Sigmoid colon (tissue), 7 donors: ENCODE measurements at regions of chr2 and their contacts with region 1.

Region 1: GRCh38 chr2:174682578-174683391 is 81.5 kb downstream of the CHRNA1 start:
- DNase-seq: peak; percentile 88
- H3K4me3 ChIP-seq: peak overlapping the region; percentile 84 to 96 (median 92)
- H3K27ac ChIP-seq: peak overlapping the region; percentile 88 to 95 (median 90)
- H3K4me1 ChIP-seq: peaks cover 0 to 46% (median 27%) of the 10 kb centered on the region in 4 donors
- H3K27me3 ChIP-seq: no peaks in the 10 kb centered on the region
- CTCF ChIP-seq: no peak
- EP300 ChIP-seq: no peak
- POLR2A ChIP-seq: no peak

Region 2: GRCh38 chr2:174561283-174561971 is 121.4 kb before region 1 on chr2:
- intact Hi-C with region 1: loop called (anchors 5 kb)
- DNase-seq: peak; percentile 91
- H3K4me3 ChIP-seq: peak overlapping the region in 2 of 4 donors; percentile 19 to 26
- H3K27ac ChIP-seq: peak overlapping the region; percentile 23 to 77 (median 68)
- H3K4me1 ChIP-seq: peaks cover 0 to 25% (median 20%) of the 10 kb centered on the region in 4 donors
- H3K27me3 ChIP-seq: no peaks in the 10 kb centered on the region
- CTCF ChIP-seq: no peak
- EP300 ChIP-seq: peak in 1 of 4 donors; percentile 8
- POLR2A ChIP-seq: no peak

Region 3: DNA sequence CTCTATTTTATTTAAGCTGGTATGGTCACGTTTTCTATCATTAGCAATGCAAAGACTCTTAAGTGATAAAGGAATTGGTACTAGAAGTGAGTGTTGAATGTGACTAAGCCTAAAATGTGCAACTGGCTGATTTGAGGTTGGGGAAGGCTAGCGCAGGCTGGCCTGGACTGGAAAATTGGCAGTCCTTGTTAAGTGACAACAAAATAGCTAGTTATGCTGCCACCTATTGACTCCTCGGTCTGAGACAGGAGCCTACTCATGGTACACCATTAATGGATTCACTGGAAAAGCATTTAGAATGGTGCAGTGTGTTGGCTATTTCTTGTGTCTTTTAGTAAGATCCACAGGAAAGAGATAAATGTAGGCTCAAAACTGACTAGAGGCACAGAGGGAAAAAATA is 79.5 kb before region 1 on chr2:
- intact Hi-C with region 1: loop called (anchors 5 kb)
- DNase-seq: peak; percentile 77
- H3K4me3 ChIP-seq: no peak overlapping the region
- H3K27ac ChIP-seq: peak overlapping the region in 2 of 4 donors; percentile 8 to 33
- H3K4me1 ChIP-seq: peaks cover 0 to 57% (median 37%) of the 10 kb centered on the region in 4 donors
- H3K27me3 ChIP-seq: no peaks in the 10 kb centered on the region
- CTCF ChIP-seq: peak in 3 of 4 experiments; percentile 12 to 33 (median 21)
- EP300 ChIP-seq: no peak
- POLR2A ChIP-seq: no peak

Region 4: DNA sequence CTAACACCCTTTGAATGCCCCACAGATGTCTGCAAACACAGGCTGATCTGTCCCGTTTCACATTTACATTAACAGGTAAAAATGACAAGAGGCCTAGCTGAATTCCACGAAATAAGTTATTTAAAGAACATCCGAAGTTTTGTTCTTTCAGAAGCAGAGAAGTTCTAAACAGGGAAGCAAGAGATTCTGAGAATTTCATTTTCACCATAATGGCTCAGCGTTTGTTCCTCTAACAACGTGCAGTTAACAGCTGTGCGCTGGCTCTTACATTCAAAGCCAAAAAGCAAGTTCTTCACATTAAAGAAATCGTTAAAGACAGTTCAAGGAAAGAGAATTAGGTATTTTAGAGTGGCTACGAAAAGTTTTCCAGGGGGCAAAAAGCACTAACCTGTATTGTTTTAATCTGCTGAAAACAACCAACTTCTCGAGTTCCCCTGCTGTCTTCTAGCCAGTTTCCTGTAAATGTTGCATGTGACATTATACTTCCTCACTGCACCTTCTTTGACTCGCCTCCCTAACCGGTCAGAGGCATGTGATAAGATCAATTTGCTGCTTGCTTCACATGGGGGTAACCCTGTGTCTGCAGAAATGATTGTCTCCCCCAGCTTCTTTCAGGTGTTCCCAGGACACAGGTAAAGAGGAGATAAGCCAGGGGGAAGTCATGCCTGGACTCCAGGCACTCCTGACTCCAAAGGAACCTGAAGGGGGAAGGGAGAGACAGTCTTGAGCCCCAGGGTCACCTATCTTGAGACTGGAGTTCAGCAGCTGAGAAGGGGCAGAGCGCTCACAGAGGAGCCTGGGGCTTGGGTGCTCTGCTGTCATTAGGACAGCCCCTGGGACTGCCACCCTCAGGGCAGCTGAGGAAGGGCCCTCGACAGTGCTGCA is 48.4 kb before region 1 on chr2:
- intact Hi-C with region 1: loop called (anchors 5 kb)
- DNase-seq: no peak
- H3K4me3 ChIP-seq: peak overlapping the region in 2 of 4 donors; percentile 26 to 34
- H3K27ac ChIP-seq: peak overlapping the region; percentile 62 to 78 (median 73)
- H3K4me1 ChIP-seq: peaks cover 0 to 76% (median 62%) of the 10 kb centered on the region in 4 donors
- H3K27me3 ChIP-seq: no peaks in the 10 kb centered on the region
- CTCF ChIP-seq: no peak
- EP300 ChIP-seq: no peak
- POLR2A ChIP-seq: no peak